ENCODE measurements at regions of chr12 and their contacts with region 1.

Region 1: GRCh38 chr12:21989819-21990412 is 48.7 kb upstream of the ABCC9 start:
- DNase-seq: no peak
- H3K4me3 ChIP-seq: no peak overlapping the region
- CTCF ChIP-seq: no peak
- POLR2A ChIP-seq: no peak

Region 2: DNA sequence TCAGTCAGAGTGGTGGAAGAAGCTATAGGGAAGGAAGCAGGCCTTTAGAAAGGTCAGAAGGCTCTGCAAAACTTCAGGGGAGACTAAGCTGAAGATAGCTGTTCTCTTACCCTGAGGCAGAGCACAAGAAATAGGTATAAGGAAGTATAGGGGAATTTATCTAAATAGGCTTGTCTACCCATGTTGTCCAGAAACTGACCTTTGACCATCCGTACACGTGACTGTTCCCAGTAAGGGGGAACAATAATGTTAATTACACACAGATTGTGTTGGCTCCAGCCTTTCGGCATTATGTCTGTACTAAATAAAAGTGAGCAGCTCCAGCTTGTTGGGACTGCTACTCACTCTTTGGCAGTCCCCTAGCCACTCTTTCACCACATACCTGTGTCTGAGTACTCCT is 799.9 kb before region 1 on chr12:
- intact Hi-C with region 1: no loop called
- DNase-seq: no peak
- H3K4me3 ChIP-seq: no peak overlapping the region
- CTCF ChIP-seq: no peak
- POLR2A ChIP-seq: no peak

Region 3: GRCh38 chr12:21697904-21698630 is 291.8 kb before region 1 on chr12:
- intact Hi-C with region 1: loop called (anchors 10 kb)
- DNase-seq: no peak
- H3K4me3 ChIP-seq: no peak overlapping the region
- CTCF ChIP-seq: no peak
- POLR2A ChIP-seq: no peak

Region 4: GRCh38 chr12:21745258-21745657 is 244.7 kb before region 1 on chr12:
- intact Hi-C with region 1: no loop called
- DNase-seq: no peak
- H3K4me3 ChIP-seq: no peak overlapping the region
- CTCF ChIP-seq: no peak
- POLR2A ChIP-seq: no peak

Region 5: DNA sequence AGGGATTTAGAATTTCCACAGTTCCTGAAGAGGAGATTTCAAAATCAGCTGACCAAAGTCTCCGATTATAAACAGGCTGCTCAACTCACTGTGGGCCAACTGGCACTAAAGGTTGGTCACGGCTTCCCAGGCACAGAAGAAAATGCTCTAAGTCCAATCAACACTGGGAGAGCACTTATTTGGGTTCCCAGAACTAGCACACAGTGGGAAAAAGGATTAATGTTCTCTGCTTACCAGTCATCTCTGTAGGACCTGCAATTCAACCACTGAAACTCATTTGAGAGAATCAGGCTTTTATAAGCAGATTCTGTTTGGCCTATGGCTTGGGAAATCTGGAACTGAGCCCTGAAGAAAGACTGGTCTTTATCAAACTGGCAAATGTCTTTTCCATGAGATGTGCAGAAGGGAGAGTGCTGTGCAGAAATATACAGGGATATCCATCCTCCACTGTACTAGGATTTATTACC is 98.1 kb before region 1 on chr12:
- intact Hi-C with region 1: no loop called
- DNase-seq: peak; percentile 55 to 92
- H3K4me3 ChIP-seq: no peak overlapping the region
- CTCF ChIP-seq: no peak
- POLR2A ChIP-seq: no peak

Region 6: GRCh38 chr12:22164139-22164538 is 174.2 kb after region 1 on chr12:
- intact Hi-C with region 1: no loop called
- DNase-seq: no peak
- H3K4me3 ChIP-seq: no peak overlapping the region
- CTCF ChIP-seq: no peak
- POLR2A ChIP-seq: no peak